Right ventricle myocardium superior (tissue), 1 donor: ENCODE measurements at regions of chr6 and their contacts with region 1.

Region 1: DNA sequence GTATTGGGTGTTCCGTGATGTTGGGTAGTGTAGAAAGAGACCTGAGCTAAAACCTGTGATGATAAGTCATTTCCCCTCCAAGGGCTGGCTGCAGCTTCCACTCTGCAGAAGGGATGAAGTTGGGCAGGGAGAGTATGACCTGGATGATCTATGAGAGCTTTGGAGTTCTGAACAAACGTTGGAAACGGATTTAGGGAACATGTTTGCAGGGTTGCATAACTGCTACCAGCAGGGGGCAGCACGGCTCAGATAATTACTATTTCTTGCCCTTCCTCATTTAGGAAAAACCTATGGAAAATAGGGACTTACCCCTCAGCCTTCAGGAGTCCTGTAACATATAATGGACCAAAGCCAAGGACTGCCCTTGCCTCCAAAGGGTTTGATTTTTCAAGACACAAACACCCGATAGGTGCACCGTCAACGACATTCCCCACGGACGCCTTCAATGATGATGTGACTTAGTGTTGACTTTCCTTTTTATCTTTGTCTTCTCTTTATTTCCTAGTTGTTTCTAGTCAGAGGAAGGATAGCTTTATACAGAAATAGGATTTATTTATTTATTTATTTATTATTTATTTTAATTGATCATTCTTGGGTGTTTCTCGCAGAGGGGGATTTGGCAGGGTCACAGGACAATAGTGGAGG is 164.9 kb upstream of the SASH1 start:
- DNase-seq: peak; percentile 78
- ATAC-seq: peak; percentile 69

Region 2: GRCh38 chr6:148250975-148251685 is 73.4 kb after region 1 on chr6:
- intact Hi-C with region 1: loop called (anchors 5 kb)
- DNase-seq: no peak
- ATAC-seq: peak; percentile 83